PC-9 (cell line): ENCODE measurements at regions of chr1 and their contacts with region 1.

Region 1: DNA sequence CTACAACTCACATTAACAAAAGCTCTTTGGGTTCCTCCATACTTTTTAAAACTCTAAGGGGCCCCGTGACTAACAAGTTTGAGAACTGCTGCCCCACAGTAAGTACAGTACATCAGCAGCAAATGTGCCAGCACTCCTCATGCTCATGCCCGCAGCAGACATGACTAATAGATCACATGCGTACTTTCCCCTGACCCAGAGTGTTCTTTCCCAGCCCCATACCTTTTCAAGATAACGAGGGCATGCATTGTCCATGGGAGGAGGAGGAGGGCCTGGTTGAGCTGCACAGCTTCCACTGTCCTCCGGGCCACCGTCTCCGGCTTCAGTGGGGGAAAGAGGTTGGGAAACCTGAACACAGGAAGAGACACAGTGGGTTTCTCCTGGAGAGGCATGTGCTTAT is 45.5 kb downstream of the DHRS3 start:
- DNase-seq: no peak
- H3K4me3 ChIP-seq: no peak overlapping the region
- H3K27ac ChIP-seq: no peak overlapping the region
- H3K4me1 ChIP-seq: peaks cover 20% of the 10 kb centered on the region
- H3K27me3 ChIP-seq: no peaks in the 10 kb centered on the region
- CTCF ChIP-seq: no peak

Region 2: GRCh38 chr1:12549460-12550349 is 22.8 kb before region 1 on chr1:
- CTCF ChIA-PET with region 1: no interaction called
- POLR2A ChIA-PET with region 1: no interaction called
- intact Hi-C with region 1: loop called (anchors 1 kb)
- DNase-seq: peak; percentile 94
- H3K4me3 ChIP-seq: peak overlapping the region; percentile 17; the same call in 1 of the 2 replicates
- H3K27ac ChIP-seq: peak overlapping the region; percentile 69
- H3K4me1 ChIP-seq: peaks cover 22% of the 10 kb centered on the region
- H3K27me3 ChIP-seq: no peaks in the 10 kb centered on the region
- CTCF ChIP-seq: no peak

Region 3: DNA sequence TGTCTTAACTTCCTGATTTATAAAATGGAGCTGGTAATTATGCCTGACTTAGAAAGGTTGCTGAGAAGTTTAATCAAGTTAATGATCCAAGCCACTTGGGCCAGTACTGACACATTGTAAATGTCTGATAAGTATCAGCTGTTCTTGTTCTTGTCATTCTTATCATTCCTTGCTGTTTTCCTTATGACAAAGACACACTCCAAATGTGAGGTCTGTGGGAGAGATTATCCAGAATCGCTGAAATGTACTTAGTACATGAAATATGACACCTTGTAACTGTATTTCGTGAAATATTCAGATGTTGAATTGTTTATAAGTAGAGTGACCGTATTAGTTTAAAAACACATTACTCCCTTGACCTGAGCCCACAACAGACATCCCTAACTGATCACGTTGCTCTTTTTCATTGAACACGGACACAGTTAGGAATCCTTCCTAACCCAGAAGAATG is 77.5 kb after region 1 on chr1:
- CTCF ChIA-PET with region 1: no interaction called
- POLR2A ChIA-PET with region 1: interaction called, 10 read pairs
- intact Hi-C with region 1: no loop called
- DNase-seq: no peak
- H3K4me3 ChIP-seq: no peak overlapping the region
- H3K27ac ChIP-seq: no peak overlapping the region
- H3K4me1 ChIP-seq: no peaks in the 10 kb centered on the region
- H3K27me3 ChIP-seq: no peaks in the 10 kb centered on the region
- CTCF ChIP-seq: no peak